Activated CD4-positive, alpha-beta T cell treated with anti-CD3 and anti-CD28 coated beads for 36 hours (primary cell): ENCODE measurements at regions of chr11 and their contacts with region 1.

Region 1: GRCh38 chr11:122593473-122594420 is 61.8 kb upstream of the UBASH3B start:
- DNase-seq: no peak
- ATAC-seq: peak; percentile 57
- H3K4me3 Mint-ChIP-seq: no peak overlapping the region
- H3K27ac Mint-ChIP-seq: no peak overlapping the region
- H3K4me1 Mint-ChIP-seq: peaks cover 6% of the 10 kb centered on the region
- H3K27me3 Mint-ChIP-seq: peaks cover 8% of the 10 kb centered on the region

Region 2: GRCh38 chr11:121810291-121810690 is 783.5 kb before region 1 on chr11:
- CTCF ChIA-PET with region 1: no interaction called
- POLR2A ChIA-PET with region 1: no interaction called
- intact Hi-C with region 1: loop called in 1 of 2 experiments (anchors 5 kb)
- DNase-seq: no peak
- ATAC-seq: no peak
- H3K4me3 Mint-ChIP-seq: no peak overlapping the region
- H3K27ac Mint-ChIP-seq: no peak overlapping the region
- H3K4me1 Mint-ChIP-seq: no peaks in the 10 kb centered on the region
- H3K27me3 Mint-ChIP-seq: no peaks in the 10 kb centered on the region